Endothelial cell of umbilical vein (primary cell): ENCODE measurements at regions of chr13 and their contacts with region 1.

Region 1: DNA sequence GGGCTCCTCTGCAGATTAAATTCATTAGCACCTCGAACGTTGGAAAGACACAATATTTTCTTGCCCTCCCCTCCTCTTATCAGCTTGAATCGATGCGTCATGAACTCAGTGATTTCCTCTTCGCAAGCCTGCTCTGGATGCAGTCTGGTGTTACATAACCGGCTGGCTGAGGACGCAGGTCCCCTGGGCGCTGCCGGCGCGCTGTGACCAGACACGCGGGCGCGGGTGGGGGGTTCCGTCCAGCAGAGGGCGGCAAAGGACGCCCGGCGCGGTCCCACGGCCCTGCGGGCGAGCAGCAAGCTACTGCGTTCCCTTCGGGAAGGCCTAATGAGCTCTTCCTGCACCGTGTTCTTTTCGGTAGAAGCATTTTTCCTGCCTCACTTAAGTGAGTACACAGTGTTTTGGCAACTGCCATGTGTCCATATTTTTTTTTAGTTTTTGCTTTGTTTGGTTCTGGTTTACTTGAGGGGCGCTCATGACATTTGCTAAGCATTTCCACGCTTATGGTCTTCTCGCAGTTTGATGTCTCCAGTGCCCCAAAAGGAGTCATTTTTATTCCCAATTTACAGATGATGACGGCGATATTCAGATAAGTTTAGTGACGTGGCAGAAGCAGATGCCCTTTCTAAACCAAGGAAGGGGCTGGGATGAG is 112.2 kb upstream of the MBNL2 start:
- DNase-seq: peak; percentile 93
- H3K4me3 ChIP-seq: no peak overlapping the region
- H3K27ac ChIP-seq: no peak overlapping the region
- H3K4me1 ChIP-seq: peaks cover 17% of the 10 kb centered on the region
- H3K27me3 ChIP-seq: no peaks in the 10 kb centered on the region
- CTCF ChIP-seq: peak; percentile 96 to 99
- POLR2A ChIP-seq: no peak

Region 2: DNA sequence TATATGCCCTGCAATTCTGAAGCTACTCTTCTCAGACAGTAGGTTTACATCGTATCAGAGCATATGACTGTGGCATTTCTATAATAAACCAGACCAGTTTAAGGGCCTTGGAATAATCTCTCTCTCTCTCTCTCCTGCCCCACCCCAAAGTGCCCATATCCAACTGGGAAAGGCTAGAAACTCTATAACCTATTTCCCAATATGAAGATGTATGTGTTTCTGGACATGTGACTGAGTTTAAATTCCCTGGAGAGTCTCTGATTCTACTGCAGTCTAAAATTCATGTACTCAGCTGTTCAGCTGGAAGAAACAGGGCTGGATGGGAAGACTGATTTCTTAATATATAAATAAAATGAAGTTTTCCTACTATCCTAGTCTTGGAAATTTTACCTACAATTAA is 20.2 kb after region 1 on chr13:
- CTCF ChIA-PET with region 1: interaction called, 12 read pairs
- POLR2A ChIA-PET with region 1: no interaction called
- dilution Hi-C with region 1: no loop called
- intact Hi-C with region 1: no loop called
- DNase-seq: no peak
- H3K4me3 ChIP-seq: no peak overlapping the region
- H3K27ac ChIP-seq: no peak overlapping the region
- H3K4me1 ChIP-seq: no peaks in the 10 kb centered on the region
- H3K27me3 ChIP-seq: peaks cover 6 to 9% of the 10 kb centered on the region in 2 experiments
- CTCF ChIP-seq: no peak
- POLR2A ChIP-seq: no peak

Region 3: GRCh38 chr13:97221989-97222700 is 112.2 kb after region 1 on chr13 and contains the start of gene MBNL2:
- CTCF ChIA-PET with region 1: interaction called, 68 read pairs
- POLR2A ChIA-PET with region 1: interaction called, 4 read pairs
- dilution Hi-C with region 1: loop called (anchors 25 kb)
- intact Hi-C with region 1: loop called (anchors 1 kb)
- DNase-seq: peak; percentile 98
- H3K4me3 ChIP-seq: peak within 1 kb of the TSS; percentile 54 to 100 (median 98)
- H3K27ac ChIP-seq: peak within 1 kb of the TSS; percentile 89
- H3K4me1 ChIP-seq: peaks cover 32% of the 10 kb centered on the region
- H3K27me3 ChIP-seq: no peaks in the 10 kb centered on the region
- CTCF ChIP-seq: no peak
- POLR2A ChIP-seq: peak; percentile 70
- total RNA-seq, gene MBNL2: 75.6 and 76.5 TPM in 2 replicates

Region 4: GRCh38 chr13:97257800-97258799 is 148.1 kb after region 1 on chr13:
- CTCF ChIA-PET with region 1: interaction called, 19 read pairs
- POLR2A ChIA-PET with region 1: no interaction called
- dilution Hi-C with region 1: no loop called
- intact Hi-C with region 1: loop called (anchors 1 kb)
- DNase-seq: peak; percentile 98
- H3K4me3 ChIP-seq: no peak overlapping the region
- H3K27ac ChIP-seq: peak overlapping the region; percentile 98
- H3K4me1 ChIP-seq: peaks cover 76% of the 10 kb centered on the region
- H3K27me3 ChIP-seq: no peaks in the 10 kb centered on the region
- CTCF ChIP-seq: peak in 1 of 2 donors; percentile 21
- POLR2A ChIP-seq: peak; percentile 46

Region 5: GRCh38 chr13:97344265-97345175 is 234.6 kb after region 1 on chr13:
- CTCF ChIA-PET with region 1: interaction called, 78 read pairs
- POLR2A ChIA-PET with region 1: no interaction called
- dilution Hi-C with region 1: no loop called
- intact Hi-C with region 1: loop called (anchors 1 kb)
- DNase-seq: peak; percentile 78
- H3K4me3 ChIP-seq: no peak overlapping the region
- H3K27ac ChIP-seq: peak overlapping the region; percentile 32
- H3K4me1 ChIP-seq: peaks cover 5% of the 10 kb centered on the region
- H3K27me3 ChIP-seq: no peaks in the 10 kb centered on the region
- CTCF ChIP-seq: peak; percentile 56 to 63
- POLR2A ChIP-seq: no peak

Region 6: GRCh38 chr13:97659602-97660001 is 549.6 kb after region 1 on chr13:
- CTCF ChIA-PET with region 1: no interaction called
- POLR2A ChIA-PET with region 1: no interaction called
- dilution Hi-C with region 1: no loop called
- intact Hi-C with region 1: loop called (anchors 2 kb)
- DNase-seq: peak; percentile 45
- H3K4me3 ChIP-seq: no peak overlapping the region
- H3K27ac ChIP-seq: no peak overlapping the region
- H3K4me1 ChIP-seq: peaks cover 54% of the 10 kb centered on the region
- H3K27me3 ChIP-seq: no peaks in the 10 kb centered on the region
- CTCF ChIP-seq: peak; percentile 30 to 41
- POLR2A ChIP-seq: no peak

Region 7: GRCh38 chr13:97822377-97822776 is 712.4 kb after region 1 on chr13:
- CTCF ChIA-PET with region 1: no interaction called
- POLR2A ChIA-PET with region 1: no interaction called
- dilution Hi-C with region 1: no loop called
- intact Hi-C with region 1: no loop called
- DNase-seq: no peak
- H3K4me3 ChIP-seq: no peak overlapping the region
- H3K27ac ChIP-seq: no peak overlapping the region
- H3K4me1 ChIP-seq: no peaks in the 10 kb centered on the region
- H3K27me3 ChIP-seq: peaks cover 5 to 9% of the 10 kb centered on the region in 2 experiments
- CTCF ChIP-seq: no peak
- POLR2A ChIP-seq: no peak